ENCODE measurements at regions of chr2 and their contacts with region 1.

Region 1: DNA sequence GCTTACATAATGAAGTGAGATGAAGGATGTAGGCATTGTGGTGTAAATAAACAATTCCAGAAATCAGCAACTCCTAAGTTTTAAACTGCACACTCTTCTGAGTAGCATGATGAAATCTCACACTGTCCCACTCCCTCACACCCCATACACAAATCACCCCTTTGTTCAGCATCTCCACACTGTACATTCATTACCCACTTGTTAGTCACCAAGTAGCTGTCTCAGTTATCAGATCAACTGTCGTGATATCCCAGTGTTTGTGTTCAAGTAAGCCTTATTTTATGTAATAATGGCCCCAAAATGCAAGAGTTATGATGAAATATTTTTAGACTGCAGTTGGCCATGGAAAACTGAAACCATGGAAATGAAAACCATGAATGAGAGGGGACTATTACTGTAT is 135.7 kb downstream of the GRB14 start:
- DNase-seq: no peak
- H3K4me3 ChIP-seq: no peak overlapping the region
- H3K27ac ChIP-seq: no peak overlapping the region
- H3K4me1 ChIP-seq: no peaks in the 10 kb centered on the region
- H3K27me3 ChIP-seq: no peaks in the 10 kb centered on the region
- CTCF ChIP-seq: no peak

Region 2: DNA sequence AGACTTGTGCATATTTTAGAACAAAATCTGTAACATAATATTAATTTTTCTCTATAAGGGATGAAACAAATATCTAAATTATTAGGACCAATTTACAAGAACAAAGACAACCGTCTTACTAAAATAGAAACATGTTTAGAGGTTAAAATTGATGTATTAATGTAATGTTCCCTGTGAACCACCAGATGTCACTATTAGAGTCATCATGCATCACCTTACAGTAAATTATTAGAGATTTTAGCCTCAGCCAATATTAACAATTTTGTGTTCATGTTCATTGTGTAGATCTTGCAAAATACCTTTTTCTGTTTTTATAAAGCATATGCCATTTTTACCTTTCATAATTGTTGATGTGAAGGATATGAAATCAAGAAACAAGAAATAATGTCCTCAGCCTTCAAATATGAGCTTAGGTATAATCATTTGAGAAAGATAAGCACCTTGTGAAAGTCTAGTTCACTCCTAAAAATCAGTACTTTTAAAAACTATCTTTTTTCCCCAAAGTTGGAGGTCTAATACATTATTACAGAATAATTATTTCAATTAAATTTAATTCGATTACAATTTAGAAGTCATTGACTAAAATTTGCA is 1302.7 kb before region 1 on chr2:
- intact Hi-C with region 1: loop called (anchors 10 kb)
- DNase-seq: peak in 1 of 5 donors; percentile 36
- H3K4me3 ChIP-seq: no peak overlapping the region
- H3K27ac ChIP-seq: no peak overlapping the region
- H3K4me1 ChIP-seq: no peaks in the 10 kb centered on the region
- H3K27me3 ChIP-seq: no peaks in the 10 kb centered on the region
- CTCF ChIP-seq: peak; percentile 38

Region 3: GRCh38 chr2:164335947-164336346 is 149.6 kb before region 1 on chr2:
- intact Hi-C with region 1: no loop called
- DNase-seq: peak in 1 of 5 donors; percentile 1
- H3K4me3 ChIP-seq: no peak overlapping the region
- H3K27ac ChIP-seq: no peak overlapping the region
- H3K4me1 ChIP-seq: no peaks in the 10 kb centered on the region
- H3K27me3 ChIP-seq: no peaks in the 10 kb centered on the region
- CTCF ChIP-seq: no peak

Region 4: GRCh38 chr2:164589522-164589921 is 104.0 kb after region 1 on chr2:
- intact Hi-C with region 1: no loop called
- DNase-seq: no peak
- H3K4me3 ChIP-seq: no peak overlapping the region
- H3K27ac ChIP-seq: no peak overlapping the region
- H3K4me1 ChIP-seq: no peaks in the 10 kb centered on the region
- H3K27me3 ChIP-seq: no peaks in the 10 kb centered on the region
- CTCF ChIP-seq: no peak

Region 5: GRCh38 chr2:164803776-164804466 is 318.4 kb after region 1 on chr2:
- intact Hi-C with region 1: no loop called
- DNase-seq: peak in 1 of 5 donors; percentile 26
- H3K4me3 ChIP-seq: no peak overlapping the region
- H3K27ac ChIP-seq: no peak overlapping the region
- H3K4me1 ChIP-seq: peaks cover 0 to 4% (median 0%) of the 10 kb centered on the region in 3 donors
- H3K27me3 ChIP-seq: no peaks in the 10 kb centered on the region
- CTCF ChIP-seq: no peak

Region 6: DNA sequence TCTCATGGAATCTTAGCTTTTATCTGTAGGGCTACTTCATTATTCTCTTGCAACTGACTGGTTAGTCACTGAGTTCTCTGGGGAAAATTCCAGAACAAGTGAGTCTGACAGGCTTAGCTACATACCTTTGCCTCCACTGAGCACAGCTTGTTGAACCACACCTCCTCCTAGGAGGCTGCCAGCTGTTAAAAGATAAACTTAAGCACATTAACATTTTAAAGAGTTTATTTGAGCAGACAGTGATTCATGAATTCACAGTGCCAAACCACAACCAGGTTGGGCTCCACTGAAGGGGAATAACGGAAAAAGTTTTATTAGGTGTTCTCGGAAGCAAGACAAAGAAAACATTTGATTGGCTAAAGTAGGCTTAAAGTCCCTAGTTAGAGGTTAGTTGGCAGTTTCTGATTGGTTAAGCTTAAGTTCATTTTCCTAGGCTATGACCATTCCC is 482.3 kb after region 1 on chr2:
- intact Hi-C with region 1: no loop called
- DNase-seq: no peak
- H3K4me3 ChIP-seq: no peak overlapping the region
- H3K27ac ChIP-seq: no peak overlapping the region
- H3K4me1 ChIP-seq: no peaks in the 10 kb centered on the region
- H3K27me3 ChIP-seq: no peaks in the 10 kb centered on the region
- CTCF ChIP-seq: no peak